ENCODE measurements at regions of chr6 and their contacts with region 1.

Region 1: GRCh38 chr6:48021904-48022303 is 89.1 kb downstream of the PTCHD4 start:
- DNase-seq: no peak
- ATAC-seq: no peak
- H3K4me3 ChIP-seq: no peak overlapping the region
- H3K27ac ChIP-seq: no peak overlapping the region
- H3K4me1 ChIP-seq: no peaks in the 10 kb centered on the region
- H3K27me3 ChIP-seq: no peaks in the 10 kb centered on the region
- CTCF ChIP-seq: no peak

Region 2: DNA sequence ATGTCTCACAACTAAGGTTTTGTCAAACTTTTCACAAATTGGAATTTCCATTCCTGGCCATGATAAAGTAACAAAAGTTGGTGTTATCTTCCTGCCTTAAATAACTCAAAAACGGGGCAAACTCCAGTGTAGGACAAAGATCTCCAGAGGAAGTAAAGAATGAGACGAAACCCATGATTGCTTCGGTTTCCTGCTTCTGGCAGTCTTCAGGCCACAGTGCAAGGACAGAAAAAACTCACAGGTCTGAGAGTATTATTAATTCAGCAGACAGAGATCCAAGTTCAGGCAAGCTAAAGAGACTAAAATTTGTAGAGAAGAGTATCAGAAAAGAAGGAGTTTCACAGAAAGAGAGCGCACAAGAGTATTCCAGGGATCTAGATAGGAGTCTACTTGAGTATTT is 1465.9 kb before region 1 on chr6:
- intact Hi-C with region 1: no loop called
- DNase-seq: no peak
- ATAC-seq: no peak
- H3K4me3 ChIP-seq: no peak overlapping the region
- H3K27ac ChIP-seq: no peak overlapping the region
- H3K4me1 ChIP-seq: no peaks in the 10 kb centered on the region
- H3K27me3 ChIP-seq: no peaks in the 10 kb centered on the region
- CTCF ChIP-seq: no peak

Region 3: GRCh38 chr6:49923826-49924225 is 1901.9 kb after region 1 on chr6:
- intact Hi-C with region 1: loop called in 1 of 10 experiments (anchors 5 kb)
- DNase-seq: no peak
- ATAC-seq: no peak
- H3K4me3 ChIP-seq: no peak overlapping the region
- H3K27ac ChIP-seq: no peak overlapping the region
- H3K4me1 ChIP-seq: no peaks in the 10 kb centered on the region
- H3K27me3 ChIP-seq: peaks cover 0 to 5% (median 0%) of the 10 kb centered on the region in 7 donors
- CTCF ChIP-seq: no peak

Measured in heart right ventricle (tissue), 16 donors.